GM13976 (cell line): ENCODE measurements at regions of chr5 and their contacts with region 1.

Region 1: GRCh38 chr5:59007460-59008063 is 424.7 kb downstream of the RAB3C start:
- DNase-seq: peak; percentile 28
- CTCF ChIP-seq: no peak

Region 2: DNA sequence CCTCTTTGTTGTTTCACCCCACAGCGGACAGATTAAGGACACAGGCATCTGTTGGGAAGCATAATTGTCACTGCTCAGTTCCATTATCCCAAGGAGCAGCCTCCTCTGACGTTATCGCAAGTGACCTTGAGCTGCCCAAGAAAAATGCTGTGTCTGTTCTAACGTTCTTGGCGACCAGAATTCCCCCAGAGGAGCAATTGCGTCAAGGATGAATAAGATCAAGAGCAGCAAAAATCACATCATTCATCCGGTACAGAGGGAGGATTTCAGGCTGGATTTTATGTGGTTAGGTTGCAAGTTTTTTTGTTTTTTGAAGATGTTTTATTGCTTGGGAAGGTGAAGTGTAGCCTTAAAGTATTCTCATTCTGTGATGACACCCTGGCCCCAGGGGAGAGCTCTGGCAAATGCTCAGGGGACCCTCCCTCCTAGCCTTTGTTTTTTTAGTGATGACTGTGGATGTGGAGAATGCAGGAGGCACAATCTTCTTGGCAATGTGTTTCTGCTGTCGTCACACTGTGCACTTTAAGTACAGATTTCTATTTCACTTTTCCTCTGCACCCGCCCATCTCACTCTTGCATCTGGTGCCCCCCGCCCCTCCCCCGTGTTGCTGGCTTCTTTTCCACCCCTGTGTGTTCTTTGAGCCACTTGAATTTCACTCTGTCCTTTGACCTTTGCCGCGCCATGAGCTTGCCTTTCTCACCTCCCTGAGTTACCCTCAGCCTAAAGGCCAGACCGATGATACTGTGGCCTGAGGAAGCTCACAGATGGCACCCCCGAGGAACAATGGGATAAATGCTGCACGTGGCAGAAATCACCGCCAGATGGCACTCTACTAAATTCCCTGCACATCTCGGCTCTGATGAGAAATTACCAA is 116.2 kb before region 1 on chr5:
- in situ Hi-C with region 1: loop called (anchors 10 kb)
- DNase-seq: peak; percentile 48
- CTCF ChIP-seq: peak; percentile 51

Region 3: DNA sequence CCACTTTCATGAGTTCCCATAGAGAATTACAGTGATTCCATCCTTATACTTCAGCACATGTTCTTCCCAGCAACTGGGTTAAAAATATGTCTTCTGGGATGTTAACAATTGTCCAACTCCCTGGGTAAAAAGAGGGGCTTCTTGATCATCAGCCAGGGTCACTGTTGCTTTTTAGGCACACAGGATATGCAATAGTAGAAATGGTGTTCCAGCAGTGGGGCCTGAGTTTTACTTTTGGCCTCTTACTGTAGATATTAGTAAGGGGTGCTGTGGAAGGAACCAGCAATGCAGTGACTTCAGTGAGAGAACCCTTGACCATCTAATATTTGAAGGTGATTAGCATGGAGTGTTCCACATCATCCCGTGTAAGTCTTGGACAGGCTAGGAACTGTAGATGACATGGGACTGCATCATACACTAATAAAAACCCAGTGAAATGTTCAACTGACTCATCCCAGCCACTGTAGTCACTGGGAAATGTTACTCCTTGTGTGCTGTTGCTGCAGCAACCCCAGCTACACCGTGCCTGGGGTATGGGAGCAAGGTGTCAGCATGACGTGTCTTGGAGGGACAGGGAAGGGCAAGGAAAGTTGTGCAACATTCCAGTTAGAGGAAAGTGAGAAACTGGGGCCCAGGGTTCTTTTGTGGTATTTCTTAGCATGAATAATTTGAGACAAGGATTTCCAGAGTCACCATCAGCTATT is 186.2 kb after region 1 on chr5:
- in situ Hi-C with region 1: no loop called
- DNase-seq: no peak
- CTCF ChIP-seq: no peak